Heart right ventricle (tissue), 16 donors: ENCODE measurements at regions of chr18 and their contacts with region 1.

Region 1: GRCh38 chr18:50203801-50204604 is 9.1 kb upstream of the MYO5B start:
- DNase-seq: peak; percentile 14 to 22
- ATAC-seq: peak in 6 of 8 donors; percentile 39 to 66 (median 44)
- H3K4me3 ChIP-seq: peak overlapping the region in 1 of 10 donors; percentile 10
- H3K27ac ChIP-seq: no peak overlapping the region
- H3K4me1 ChIP-seq: peaks cover 0 to 9% (median 0%) of the 10 kb centered on the region in 9 donors
- H3K27me3 ChIP-seq: peaks cover 0 to 47% (median 19%) of the 10 kb centered on the region in 7 donors
- CTCF ChIP-seq: peak; percentile 13 to 68 (median 56)

Region 2: GRCh38 chr18:49944663-49945062 is 259.3 kb before region 1 on chr18:
- intact Hi-C with region 1: loop called in 2 of 10 experiments (anchors 10 kb)
- DNase-seq: peak in 1 of 2 donors; percentile 22
- ATAC-seq: peak in 1 of 8 donors; percentile 67
- H3K4me3 ChIP-seq: no peak overlapping the region
- H3K27ac ChIP-seq: no peak overlapping the region
- H3K4me1 ChIP-seq: no peaks in the 10 kb centered on the region
- H3K27me3 ChIP-seq: peaks cover 0 to 21% (median 6%) of the 10 kb centered on the region in 7 donors
- CTCF ChIP-seq: peak in 6 of 9 donors; percentile 11 to 52 (median 30)

Region 3: GRCh38 chr18:50266248-50266704 is 62.3 kb after region 1 on chr18 and contains the start of gene CFAP53:
- intact Hi-C with region 1: no loop called
- DNase-seq: peak; percentile 94 to 95
- ATAC-seq: peak; percentile 97 to 99 (median 98)
- H3K4me3 ChIP-seq: peak within 1 kb of the TSS; percentile 27 to 74 (median 70)
- H3K27ac ChIP-seq: peak within 1 kb of the TSS in 7 of 10 donors; percentile 31 to 69 (median 40)
- H3K4me1 ChIP-seq: peaks cover 0 to 36% (median 15%) of the 10 kb centered on the region in 9 donors
- H3K27me3 ChIP-seq: no peaks in the 10 kb centered on the region
- CTCF ChIP-seq: no peak
- total RNA-seq, gene CFAP53: 0.15 to 0.25 (median 0.18) TPM in 6 of 10 donors, not detected in the others